ENCODE measurements at regions of chr20 and their contacts with region 1.

Region 1: GRCh38 chr20:62407221-62407992 is at the start of gene CABLES2:
- DNase-seq: peak; percentile 96 to 98 (median 98)
- ATAC-seq: peak; percentile 89 to 90
- H3K4me3 ChIP-seq: peak within 1 kb of the TSS; percentile 78
- H3K27ac ChIP-seq: peak within 1 kb of the TSS; percentile 16
- H3K4me1 ChIP-seq: peaks cover 4% of the 10 kb centered on the region
- H3K27me3 ChIP-seq: no peaks in the 10 kb centered on the region
- total RNA-seq, gene CABLES2: 12.3 to 29.4 (median 16.3) TPM

Region 2: DNA sequence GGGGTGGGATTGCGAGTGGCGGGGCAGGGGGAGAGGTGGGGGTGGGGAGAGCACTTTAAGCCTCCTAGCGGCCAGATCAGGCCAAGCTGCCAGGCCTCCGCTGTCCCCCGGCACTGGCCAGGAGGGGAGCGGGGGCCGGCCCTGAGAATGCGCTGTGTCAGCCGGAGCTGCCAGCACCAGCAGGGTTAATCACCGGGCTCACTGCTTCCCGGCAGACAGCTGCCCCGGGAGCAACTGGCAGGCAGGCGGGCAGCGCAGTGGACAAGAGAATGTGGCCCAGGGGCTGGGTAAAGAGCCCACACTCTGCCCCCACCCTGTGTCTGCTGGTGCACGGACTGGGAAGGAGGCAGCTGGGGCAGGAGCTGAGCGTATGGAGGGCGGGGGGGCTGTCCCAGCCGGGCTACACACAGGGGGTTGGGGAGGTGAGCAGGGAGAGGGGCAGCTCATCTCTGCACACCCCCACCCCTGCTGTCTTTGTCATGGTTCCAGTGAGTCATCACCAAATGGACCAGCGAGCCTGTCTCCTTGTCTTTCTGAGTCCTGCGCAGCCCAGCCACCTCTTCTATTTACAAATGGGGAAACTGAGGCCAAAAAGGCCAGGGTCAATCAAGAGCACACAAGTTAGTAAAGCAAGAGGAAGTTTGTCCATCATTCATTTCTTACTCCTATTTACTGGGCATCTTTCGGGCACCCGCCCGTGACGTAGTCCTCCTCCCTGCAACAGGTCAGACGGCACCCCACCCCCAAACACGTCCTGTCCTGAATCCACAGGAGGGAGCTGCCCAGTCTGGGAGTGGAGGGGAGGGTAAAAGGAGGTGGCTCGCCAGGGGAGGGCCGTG is 38.2 kb before region 1 on chr20:
- intact Hi-C with region 1: no loop called
- DNase-seq: peak in 2 of 3 donors; percentile 67 to 72
- ATAC-seq: peak in 1 of 2 donors; percentile 3
- H3K4me3 ChIP-seq: no peak overlapping the region
- H3K27ac ChIP-seq: no peak overlapping the region
- H3K4me1 ChIP-seq: peaks cover 2% of the 10 kb centered on the region
- H3K27me3 ChIP-seq: no peaks in the 10 kb centered on the region

Region 3: DNA sequence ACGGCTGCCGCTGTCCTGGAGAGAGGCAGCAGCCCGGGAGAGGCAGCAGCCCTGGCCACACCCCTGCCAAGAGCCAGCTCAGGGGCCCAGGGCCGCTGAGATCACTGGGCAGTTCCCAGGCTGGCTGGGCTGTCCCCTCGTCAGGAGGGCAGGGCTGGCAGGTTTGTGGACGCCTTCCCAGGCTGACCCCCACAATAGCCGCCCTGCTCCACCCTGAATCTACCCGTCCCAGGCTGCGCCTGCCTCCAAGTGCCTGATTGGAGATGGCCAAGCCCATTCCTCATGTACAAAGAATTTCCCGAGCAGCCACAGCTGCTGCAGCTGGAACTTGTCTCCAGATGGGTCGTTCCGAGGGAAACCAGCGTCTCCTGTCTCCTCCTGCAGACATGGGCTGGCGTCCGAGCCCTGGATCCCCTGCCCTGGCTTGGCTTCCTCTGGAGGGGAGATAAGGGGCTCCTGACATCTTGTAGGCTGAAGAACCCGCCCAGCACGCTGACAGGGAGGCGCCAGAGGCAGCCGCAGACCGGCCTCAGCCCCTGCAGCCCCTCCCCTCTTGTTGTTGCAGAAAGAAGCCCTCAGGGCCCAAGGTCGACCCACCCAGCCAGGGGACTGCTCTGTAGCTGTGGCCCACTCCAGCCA is 77.8 kb after region 1 on chr20:
- intact Hi-C with region 1: loop called in 2 of 4 experiments (anchors 5 to 10 kb)
- DNase-seq: peak; percentile 69 to 92 (median 89)
- ATAC-seq: peak; percentile 64 to 74
- H3K4me3 ChIP-seq: no peak overlapping the region
- H3K27ac ChIP-seq: no peak overlapping the region
- H3K4me1 ChIP-seq: peaks cover 5% of the 10 kb centered on the region
- H3K27me3 ChIP-seq: no peaks in the 10 kb centered on the region

Region 4: DNA sequence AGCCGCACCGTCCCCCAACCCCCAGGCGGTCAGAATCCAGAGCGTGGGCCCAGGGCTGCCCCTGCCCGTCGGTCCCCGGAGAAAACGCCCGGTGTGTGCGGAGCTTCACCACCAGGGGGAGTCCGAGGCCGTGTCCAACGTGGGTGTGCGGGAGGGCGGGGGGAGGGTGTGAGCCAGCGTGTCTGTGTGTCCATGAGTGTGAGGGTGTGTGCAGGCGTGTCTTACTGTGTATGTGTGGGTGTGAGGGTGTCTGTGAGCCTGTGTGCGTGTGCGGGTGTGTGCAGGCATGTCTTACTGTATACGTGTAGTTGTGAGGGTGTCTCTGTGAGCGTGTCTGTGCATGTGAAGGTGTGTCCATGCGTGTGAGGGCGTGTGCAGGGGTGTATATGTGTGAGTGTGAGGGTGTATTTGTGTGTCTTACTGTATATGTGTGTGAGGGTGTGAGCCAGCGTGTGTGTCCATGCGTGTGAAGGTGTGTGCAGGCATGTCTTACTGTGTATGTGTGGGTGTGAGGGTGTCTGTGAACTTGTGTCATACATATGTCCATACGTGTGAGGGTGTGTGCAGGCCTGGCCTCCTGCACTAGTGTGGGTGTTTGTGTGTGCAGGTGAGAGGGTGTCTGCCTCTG is 92.9 kb after region 1 on chr20:
- intact Hi-C with region 1: loop called in 1 of 4 experiments (anchors 10 kb)
- DNase-seq: peak; percentile 77 to 93 (median 92)
- ATAC-seq: peak; percentile 59 to 68
- H3K4me3 ChIP-seq: no peak overlapping the region
- H3K27ac ChIP-seq: no peak overlapping the region
- H3K4me1 ChIP-seq: no peaks in the 10 kb centered on the region
- H3K27me3 ChIP-seq: no peaks in the 10 kb centered on the region

Region 5: DNA sequence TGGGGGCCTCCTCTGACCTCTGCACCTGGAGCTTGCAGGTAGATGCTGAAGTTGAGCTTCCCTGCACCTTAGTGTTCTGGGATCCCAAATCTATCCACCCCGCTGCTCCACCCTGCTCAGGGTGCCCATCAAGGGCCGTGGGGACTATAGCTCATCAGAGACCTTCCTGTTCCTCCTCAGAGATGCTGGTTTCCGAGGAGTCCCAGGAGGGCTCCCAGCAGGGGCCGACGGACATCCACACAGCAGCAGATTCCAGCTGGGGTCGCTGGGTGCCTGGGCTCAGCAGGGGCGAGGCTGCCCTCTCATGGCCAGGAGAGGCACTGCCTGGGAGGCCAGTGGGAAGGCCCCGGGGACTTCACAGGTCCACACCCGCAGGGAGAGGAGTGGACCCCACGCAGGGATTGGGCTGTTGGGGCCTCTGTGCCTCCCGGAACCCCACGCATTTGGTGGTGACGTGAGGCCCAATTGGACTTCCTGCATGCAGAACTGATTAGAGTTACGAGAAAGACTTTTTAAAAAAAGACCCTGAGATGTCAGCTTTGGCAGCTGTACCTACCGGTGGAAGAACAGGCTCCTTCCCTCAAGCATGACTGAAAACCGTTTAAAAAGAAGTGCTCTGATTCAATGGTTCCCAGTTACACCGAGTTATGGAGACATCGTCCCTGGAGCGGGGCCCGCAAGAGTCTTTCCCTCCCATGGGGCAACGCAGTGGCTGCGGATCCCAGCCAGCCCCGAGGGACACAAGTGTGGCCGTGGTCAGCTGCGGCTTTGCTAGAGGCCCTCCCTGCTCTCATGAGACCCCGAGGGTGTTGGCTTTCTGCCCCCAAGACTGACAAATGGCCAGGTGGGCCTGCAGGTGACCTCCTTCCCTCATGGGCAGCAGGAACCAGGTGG is 209.6 kb after region 1 on chr20:
- intact Hi-C with region 1: loop called in 3 of 4 experiments (anchors 5 to 10 kb)
- DNase-seq: peak; percentile 75 to 90 (median 88)
- ATAC-seq: peak; percentile 79 to 82
- H3K4me3 ChIP-seq: no peak overlapping the region
- H3K27ac ChIP-seq: peak overlapping the region; percentile 95
- H3K4me1 ChIP-seq: no peaks in the 10 kb centered on the region
- H3K27me3 ChIP-seq: no peaks in the 10 kb centered on the region

Region 6: GRCh38 chr20:62623488-62624324 is 216.3 kb after region 1 on chr20:
- intact Hi-C with region 1: loop called in 3 of 4 experiments (anchors 5 to 10 kb)
- DNase-seq: peak; percentile 96 to 98 (median 96)
- ATAC-seq: peak; percentile 93 to 94
- H3K4me3 ChIP-seq: no peak overlapping the region
- H3K27ac ChIP-seq: peak overlapping the region; percentile 95
- H3K4me1 ChIP-seq: peaks cover 12% of the 10 kb centered on the region
- H3K27me3 ChIP-seq: no peaks in the 10 kb centered on the region

Region 7: GRCh38 chr20:62832212-62832922 is 425.0 kb after region 1 on chr20:
- intact Hi-C with region 1: no loop called
- DNase-seq: peak in 2 of 3 donors; percentile 55 to 75
- ATAC-seq: peak; percentile 7 to 8
- H3K4me3 ChIP-seq: no peak overlapping the region
- H3K27ac ChIP-seq: no peak overlapping the region
- H3K4me1 ChIP-seq: no peaks in the 10 kb centered on the region
- H3K27me3 ChIP-seq: no peaks in the 10 kb centered on the region